H1 (cell line): ENCODE measurements at regions of chr3 and their contacts with region 1.

Region 1: DNA sequence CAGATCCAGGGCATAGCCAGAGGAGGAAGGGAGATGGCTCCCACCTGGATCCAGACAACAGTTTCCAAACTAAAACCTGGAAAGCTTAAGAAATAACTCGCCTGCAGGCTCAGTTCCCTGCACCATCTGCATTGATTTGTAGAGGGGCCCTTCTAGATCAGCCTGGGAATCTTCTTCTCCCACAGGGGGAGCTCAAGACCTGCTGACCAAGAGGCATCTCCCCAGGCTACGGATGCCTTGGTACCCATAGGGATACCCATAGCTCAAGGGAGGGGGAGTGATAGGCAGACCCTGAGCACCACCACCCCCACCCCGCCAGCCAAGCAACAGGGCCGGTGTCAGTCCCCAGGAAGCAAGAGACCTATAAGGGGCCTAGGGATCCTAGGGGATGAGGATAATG is 28.0 kb upstream of the DCLK3 start:
- DNase-seq: peak; percentile 29 to 66
- H3K4me3 ChIP-seq: no peak overlapping the region
- H3K27ac ChIP-seq: no peak overlapping the region
- H3K4me1 ChIP-seq: no peaks in the 10 kb centered on the region
- H3K27me3 ChIP-seq: no peaks in the 10 kb centered on the region
- CTCF ChIP-seq: peak; percentile 73 to 91 (median 82)
- EP300 ChIP-seq: no peak
- POLR2A ChIP-seq: no peak
- RAD21 ChIP-seq: peak; percentile 90 to 95

Region 2: GRCh38 chr3:36729204-36730056 is 62.9 kb before region 1 on chr3:
- CTCF ChIA-PET with region 1: interaction called, 14 read pairs
- POLR2A ChIA-PET with region 1: no interaction called
- DNase-seq: no peak
- H3K4me3 ChIP-seq: no peak overlapping the region
- H3K27ac ChIP-seq: no peak overlapping the region
- H3K4me1 ChIP-seq: no peaks in the 10 kb centered on the region
- H3K27me3 ChIP-seq: no peaks in the 10 kb centered on the region
- CTCF ChIP-seq: peak in 2 of 3 experiments; percentile 50 to 65; a peak in 2 of 4 replicates
- EP300 ChIP-seq: no peak
- POLR2A ChIP-seq: no peak
- RAD21 ChIP-seq: peak; percentile 87 to 92

Region 3: GRCh38 chr3:36769926-36770325 is 22.4 kb before region 1 on chr3:
- CTCF ChIA-PET with region 1: interaction called, 11 read pairs
- POLR2A ChIA-PET with region 1: no interaction called
- DNase-seq: no peak
- H3K4me3 ChIP-seq: no peak overlapping the region
- H3K27ac ChIP-seq: no peak overlapping the region
- H3K4me1 ChIP-seq: peaks cover 2 to 5% (median 3%) of the 10 kb centered on the region in 4 experiments; a peak in 3 of 7 replicates
- H3K27me3 ChIP-seq: peaks cover 2 to 7% (median 6%) of the 10 kb centered on the region in 4 experiments
- CTCF ChIP-seq: no peak
- EP300 ChIP-seq: no peak
- POLR2A ChIP-seq: no peak
- RAD21 ChIP-seq: no peak

Region 4: GRCh38 chr3:36814776-36815175 is 22.4 kb after region 1 on chr3:
- CTCF ChIA-PET with region 1: interaction called, 106 read pairs
- POLR2A ChIA-PET with region 1: no interaction called
- DNase-seq: no peak
- H3K4me3 ChIP-seq: no peak overlapping the region
- H3K27ac ChIP-seq: no peak overlapping the region
- H3K4me1 ChIP-seq: no peaks in the 10 kb centered on the region; a peak in 2 of 7 replicates
- H3K27me3 ChIP-seq: no peaks in the 10 kb centered on the region
- CTCF ChIP-seq: peak; percentile 29 to 45 (median 32); a peak in 3 of 4 replicates
- EP300 ChIP-seq: no peak
- POLR2A ChIP-seq: no peak
- RAD21 ChIP-seq: peak in 1 of 2 experiments; percentile 20; a peak in 1 of 4 replicates

Region 5: DNA sequence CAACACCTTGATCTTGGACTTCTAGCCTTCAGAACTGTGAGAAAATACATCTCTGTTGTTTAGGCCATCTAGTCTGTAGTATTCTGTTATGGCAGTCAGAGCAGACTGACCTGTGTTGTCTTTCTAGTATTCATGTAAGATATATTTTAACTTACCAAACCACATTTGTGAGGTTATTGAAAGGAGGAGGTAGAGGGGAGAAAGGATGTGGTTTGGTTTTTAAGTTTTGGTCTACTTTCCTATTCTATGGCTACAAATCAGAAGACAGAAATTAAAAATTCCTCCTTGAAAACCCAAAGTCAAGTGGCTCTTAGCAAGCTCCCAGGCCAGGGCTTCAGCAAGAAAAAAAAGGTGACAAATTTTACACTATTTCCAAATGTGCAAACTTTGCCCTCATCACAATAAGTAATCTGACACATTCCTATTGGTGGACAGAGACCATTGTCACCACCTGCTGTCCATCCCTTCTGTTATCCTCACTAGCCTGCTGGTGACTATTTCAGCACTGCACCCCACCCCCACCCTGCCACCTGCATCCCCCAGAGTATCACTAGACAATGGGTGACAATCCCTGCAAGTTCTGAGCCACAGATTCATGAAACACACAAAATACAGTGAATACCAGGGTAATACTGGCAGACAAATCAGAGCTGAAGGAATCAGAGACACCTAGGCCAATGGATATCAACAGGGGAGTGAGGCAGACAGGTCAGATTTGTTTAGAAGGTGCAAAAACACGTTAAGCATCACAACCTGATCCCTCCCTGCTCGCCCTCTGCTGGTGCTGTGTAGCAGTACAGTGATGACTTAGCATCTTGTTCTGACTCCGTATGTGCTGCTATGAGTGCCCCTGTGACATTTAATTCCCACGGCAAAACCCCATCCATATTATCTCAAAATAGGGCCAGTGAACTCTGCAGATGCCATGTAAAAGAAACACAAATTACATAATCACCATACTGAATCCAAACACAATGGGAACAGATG is 51.0 kb after region 1 on chr3:
- CTCF ChIA-PET with region 1: interaction called, 125 read pairs
- POLR2A ChIA-PET with region 1: no interaction called
- DNase-seq: peak; percentile 69 to 79
- H3K4me3 ChIP-seq: no peak overlapping the region
- H3K27ac ChIP-seq: no peak overlapping the region
- H3K4me1 ChIP-seq: no peaks in the 10 kb centered on the region
- H3K27me3 ChIP-seq: no peaks in the 10 kb centered on the region
- CTCF ChIP-seq: peak; percentile 80 to 99 (median 90)
- EP300 ChIP-seq: no peak
- POLR2A ChIP-seq: no peak
- RAD21 ChIP-seq: peak; percentile 63 to 68